Caco-2 (cell line): ENCODE measurements at regions of chr20 and their contacts with region 1.

Region 1: GRCh38 chr20:49610701-49611538 is 43.0 kb upstream of the PTGIS start:
- DNase-seq: peak; percentile 98 to 100
- H3K4me3 ChIP-seq: peak overlapping the region; percentile 34
- H3K4me3 Mint-ChIP-seq: peak overlapping the region; percentile 76
- H3K27ac Mint-ChIP-seq: peak overlapping the region; percentile 5
- H3K4me1 ChIP-seq: peaks cover 7% of the 10 kb centered on the region
- H3K4me1 Mint-ChIP-seq: peaks cover 19% of the 10 kb centered on the region
- H3K27me3 ChIP-seq: no peaks in the 10 kb centered on the region
- H3K27me3 Mint-ChIP-seq: no peaks in the 10 kb centered on the region
- CTCF ChIP-seq: peak; percentile 100

Region 2: GRCh38 chr20:49338061-49338460 is 272.9 kb before region 1 on chr20:
- CTCF ChIA-PET with region 1: interaction called, 3 read pairs
- POLR2A ChIA-PET with region 1: no interaction called
- intact Hi-C with region 1: loop called (anchors 1 kb)
- DNase-seq: no peak
- H3K4me3 ChIP-seq: no peak overlapping the region
- H3K4me3 Mint-ChIP-seq: no peak overlapping the region
- H3K27ac Mint-ChIP-seq: no peak overlapping the region
- H3K4me1 ChIP-seq: peaks cover 4% of the 10 kb centered on the region
- H3K4me1 Mint-ChIP-seq: no peaks in the 10 kb centered on the region
- H3K27me3 ChIP-seq: peaks cover 1% of the 10 kb centered on the region; the same call in 1 of the 2 replicates
- H3K27me3 Mint-ChIP-seq: peaks cover 16% of the 10 kb centered on the region
- CTCF ChIP-seq: no peak

Region 3: DNA sequence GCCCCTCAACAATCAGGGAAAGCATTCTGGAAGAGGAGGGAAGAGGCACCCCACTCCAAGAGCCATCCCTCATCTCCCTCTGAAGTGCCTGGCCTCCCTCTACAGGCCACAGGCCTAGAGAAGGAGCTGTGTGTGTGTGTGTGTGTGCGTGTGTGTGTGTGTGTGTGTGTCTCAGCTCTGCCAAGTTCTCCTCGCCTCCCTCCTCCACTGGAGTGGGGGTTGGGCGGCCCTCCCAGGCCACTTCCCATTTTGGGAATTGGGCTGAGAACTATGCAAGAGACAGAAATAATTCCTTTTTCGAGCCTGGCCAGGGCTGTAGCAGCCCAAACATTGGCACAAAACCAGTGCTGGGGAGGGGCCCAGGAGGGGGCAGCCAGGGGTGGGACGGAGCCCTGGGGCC is 164.1 kb before region 1 on chr20:
- CTCF ChIA-PET with region 1: no interaction called
- POLR2A ChIA-PET with region 1: no interaction called
- intact Hi-C with region 1: no loop called
- DNase-seq: peak in 1 of 2 experiments; percentile 36
- H3K4me3 ChIP-seq: no peak overlapping the region
- H3K4me3 Mint-ChIP-seq: no peak overlapping the region
- H3K27ac Mint-ChIP-seq: no peak overlapping the region
- H3K4me1 ChIP-seq: no peaks in the 10 kb centered on the region
- H3K4me1 Mint-ChIP-seq: no peaks in the 10 kb centered on the region
- H3K27me3 ChIP-seq: no peaks in the 10 kb centered on the region
- H3K27me3 Mint-ChIP-seq: peaks cover 16% of the 10 kb centered on the region
- CTCF ChIP-seq: no peak

Region 4: GRCh38 chr20:49476016-49476355 is 134.9 kb before region 1 on chr20:
- CTCF ChIA-PET with region 1: no interaction called
- POLR2A ChIA-PET with region 1: no interaction called
- intact Hi-C with region 1: no loop called
- DNase-seq: no peak
- H3K4me3 ChIP-seq: no peak overlapping the region
- H3K4me3 Mint-ChIP-seq: no peak overlapping the region
- H3K27ac Mint-ChIP-seq: no peak overlapping the region
- H3K4me1 ChIP-seq: peaks cover 5% of the 10 kb centered on the region; the same call in 1 of the 2 replicates
- H3K4me1 Mint-ChIP-seq: peaks cover 7% of the 10 kb centered on the region
- H3K27me3 ChIP-seq: peaks cover 1% of the 10 kb centered on the region
- H3K27me3 Mint-ChIP-seq: peaks cover 6% of the 10 kb centered on the region
- CTCF ChIP-seq: no peak

Region 5: GRCh38 chr20:49567421-49568334 is 43.2 kb before region 1 on chr20 and contains the start of gene PTGIS:
- CTCF ChIA-PET with region 1: interaction called, 14 read pairs
- POLR2A ChIA-PET with region 1: no interaction called
- intact Hi-C with region 1: no loop called
- DNase-seq: peak; percentile 40
- H3K4me3 ChIP-seq: peak within 1 kb of the TSS; percentile 29
- H3K4me3 Mint-ChIP-seq: peak within 1 kb of the TSS; percentile 7
- H3K27ac Mint-ChIP-seq: no peak within 1 kb of the TSS
- H3K4me1 ChIP-seq: peaks cover 9% of the 10 kb centered on the region
- H3K4me1 Mint-ChIP-seq: peaks cover 24% of the 10 kb centered on the region
- H3K27me3 ChIP-seq: no peaks in the 10 kb centered on the region
- H3K27me3 Mint-ChIP-seq: no peaks in the 10 kb centered on the region
- CTCF ChIP-seq: no peak
- total RNA-seq, gene PTGIS: 1.9 and 2.7 TPM in 2 replicates

Region 6: DNA sequence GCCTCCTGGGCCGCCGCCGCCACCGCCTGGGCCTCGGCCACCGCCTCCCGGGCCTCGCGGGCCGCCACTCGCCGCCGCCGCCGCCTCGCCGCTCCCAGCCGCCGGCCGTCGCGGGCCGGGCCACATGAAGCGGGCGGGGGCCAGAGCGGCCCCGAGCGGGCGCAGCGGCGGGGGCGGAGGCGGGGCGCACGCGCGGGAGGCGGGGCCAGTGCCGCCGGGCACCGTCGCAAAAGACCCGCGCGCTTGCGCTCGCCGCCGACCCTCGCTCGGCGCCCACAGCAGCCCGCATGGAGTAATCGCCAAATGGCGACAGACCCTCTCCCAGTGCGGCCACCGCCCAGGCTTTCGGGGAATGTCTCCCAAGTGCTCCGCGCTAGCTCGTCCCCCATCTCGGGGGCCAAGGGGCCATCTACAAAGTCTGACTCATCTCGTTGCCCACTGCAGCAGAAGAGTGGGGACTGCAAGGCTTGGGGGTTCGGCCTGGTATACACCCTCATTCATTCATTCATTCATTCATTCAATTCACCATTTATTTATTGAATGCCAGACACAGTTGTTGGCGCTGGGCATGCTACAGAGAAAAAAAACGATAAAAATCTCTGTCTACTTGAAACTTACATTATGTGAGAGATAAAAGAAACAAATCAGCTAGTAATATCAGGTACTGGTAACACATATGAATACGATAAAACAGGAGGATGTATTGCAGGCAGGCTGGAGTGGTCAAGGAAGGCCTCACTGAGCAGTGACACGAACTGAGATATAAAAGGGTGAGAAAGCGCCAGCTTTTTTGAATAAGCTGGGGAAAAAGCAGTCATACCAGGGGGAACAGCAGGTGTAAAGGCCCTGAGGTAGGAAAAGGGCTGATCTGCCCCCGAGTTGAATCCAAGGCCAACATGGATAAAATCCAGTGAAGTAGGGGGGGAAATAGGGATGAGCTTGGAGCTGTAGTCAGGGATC is 103.1 kb after region 1 on chr20 and contains the start of gene B4GALT5:
- CTCF ChIA-PET with region 1: interaction called, 7 read pairs
- POLR2A ChIA-PET with region 1: no interaction called
- intact Hi-C with region 1: loop called (anchors 2 kb)
- DNase-seq: peak; percentile 95
- H3K4me3 ChIP-seq: peak within 1 kb of the TSS; percentile 65
- H3K4me3 Mint-ChIP-seq: peak within 1 kb of the TSS; percentile 81
- H3K27ac Mint-ChIP-seq: peak within 1 kb of the TSS; percentile 79
- H3K4me1 ChIP-seq: peaks cover 25% of the 10 kb centered on the region
- H3K4me1 Mint-ChIP-seq: peaks cover 37% of the 10 kb centered on the region
- H3K27me3 ChIP-seq: no peaks in the 10 kb centered on the region
- H3K27me3 Mint-ChIP-seq: no peaks in the 10 kb centered on the region
- CTCF ChIP-seq: no peak
- total RNA-seq, gene B4GALT5: 65.0 and 67.1 TPM in 2 replicates

Region 7: GRCh38 chr20:49825521-49826033 is 214.7 kb after region 1 on chr20:
- CTCF ChIA-PET with region 1: interaction called, 8 read pairs
- POLR2A ChIA-PET with region 1: no interaction called
- intact Hi-C with region 1: loop called (anchors 1 kb)
- DNase-seq: peak in 1 of 2 experiments; percentile 64
- H3K4me3 ChIP-seq: no peak overlapping the region
- H3K4me3 Mint-ChIP-seq: no peak overlapping the region
- H3K27ac Mint-ChIP-seq: no peak overlapping the region
- H3K4me1 ChIP-seq: no peaks in the 10 kb centered on the region
- H3K4me1 Mint-ChIP-seq: peaks cover 6% of the 10 kb centered on the region
- H3K27me3 ChIP-seq: no peaks in the 10 kb centered on the region
- H3K27me3 Mint-ChIP-seq: no peaks in the 10 kb centered on the region
- CTCF ChIP-seq: peak; percentile 30 to 56

Region 8: GRCh38 chr20:49915378-49916145 is 304.6 kb after region 1 on chr20 and contains the start of gene SPATA2:
- CTCF ChIA-PET with region 1: interaction called, 24 read pairs
- POLR2A ChIA-PET with region 1: interaction called, 3 read pairs
- intact Hi-C with region 1: no loop called
- DNase-seq: peak; percentile 100
- H3K4me3 ChIP-seq: peak within 1 kb of the TSS; percentile 80
- H3K4me3 Mint-ChIP-seq: peak within 1 kb of the TSS; percentile 99
- H3K27ac Mint-ChIP-seq: peak within 1 kb of the TSS; percentile 100
- H3K4me1 ChIP-seq: peaks cover 20% of the 10 kb centered on the region
- H3K4me1 Mint-ChIP-seq: peaks cover 25% of the 10 kb centered on the region
- H3K27me3 ChIP-seq: no peaks in the 10 kb centered on the region
- H3K27me3 Mint-ChIP-seq: no peaks in the 10 kb centered on the region
- CTCF ChIP-seq: no peak
- total RNA-seq, gene SPATA2: 29.0 TPM in 2 replicates